ENCODE measurements at regions of chr19 and their contacts with region 1.

Region 1: GRCh38 chr19:12952488-12953137 is 4.4 kb downstream of the GADD45GIP1 start:
- DNase-seq: no peak
- H3K4me3 ChIP-seq: no peak overlapping the region
- H3K27ac ChIP-seq: peak overlapping the region; percentile 24
- H3K4me1 ChIP-seq: peaks cover 35% of the 10 kb centered on the region
- H3K27me3 ChIP-seq: no peaks in the 10 kb centered on the region
- CTCF ChIP-seq: no peak

Region 2: DNA sequence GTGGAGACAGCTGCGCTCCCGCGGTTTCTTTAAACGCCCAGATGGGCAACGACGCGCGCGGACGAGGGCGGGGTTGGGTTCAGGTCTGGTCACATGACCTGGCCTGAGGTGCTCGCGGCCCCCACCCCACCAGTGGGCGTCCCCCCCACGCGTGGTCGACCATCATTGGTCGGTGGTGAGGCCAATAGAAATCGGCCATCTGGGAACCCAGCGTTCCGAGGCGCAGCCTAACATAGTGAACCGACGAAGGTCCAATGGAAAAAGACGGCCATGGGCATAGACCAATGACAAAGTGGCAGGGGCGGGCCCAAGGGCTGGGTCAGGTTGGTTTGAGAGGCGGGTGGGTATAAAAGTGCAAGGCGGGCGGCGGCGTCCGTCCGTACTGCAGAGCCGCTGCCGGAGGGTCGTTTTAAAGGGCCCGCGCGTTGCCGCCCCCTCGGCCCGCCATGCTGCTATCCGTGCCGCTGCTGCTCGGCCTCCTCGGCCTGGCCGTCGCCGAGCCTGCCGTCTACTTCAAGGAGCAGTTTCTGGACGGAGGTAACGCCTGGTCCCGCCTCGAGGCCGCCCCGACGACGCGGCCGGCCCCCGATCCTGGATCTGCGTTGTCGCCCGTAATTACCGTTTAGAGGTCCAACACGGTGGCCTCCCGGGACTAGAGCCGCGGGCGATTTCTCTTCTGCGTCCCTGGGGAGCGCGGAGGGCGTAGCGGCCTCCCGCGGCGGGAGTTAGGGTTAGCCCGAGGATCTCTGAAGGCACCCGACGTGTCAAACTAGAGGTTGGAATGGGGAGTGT is 14.2 kb before region 1 on chr19 and contains the start of gene CALR:
- CTCF ChIA-PET with region 1: interaction called, 12 read pairs
- POLR2A ChIA-PET with region 1: no interaction called
- intact Hi-C with region 1: no loop called
- DNase-seq: peak; percentile 100
- H3K4me3 ChIP-seq: peak within 1 kb of the TSS; percentile 91
- H3K27ac ChIP-seq: peak within 1 kb of the TSS; percentile 95
- H3K4me1 ChIP-seq: peaks cover 32% of the 10 kb centered on the region
- H3K27me3 ChIP-seq: no peaks in the 10 kb centered on the region
- CTCF ChIP-seq: 0 out of 2 replicates have a peak, but pooled peaks have one; percentile 18
- total RNA-seq, gene CALR: 994 and 1,019 TPM in 2 replicates

Region 3: GRCh38 chr19:13172068-13172896 is 219.7 kb after region 1 on chr19:
- CTCF ChIA-PET with region 1: no interaction called
- POLR2A ChIA-PET with region 1: no interaction called
- intact Hi-C with region 1: no loop called
- DNase-seq: peak; percentile 84
- H3K4me3 ChIP-seq: no peak overlapping the region
- H3K27ac ChIP-seq: peak overlapping the region; percentile 55
- H3K4me1 ChIP-seq: peaks cover 28% of the 10 kb centered on the region
- H3K27me3 ChIP-seq: no peaks in the 10 kb centered on the region
- CTCF ChIP-seq: no peak

Region 4: GRCh38 chr19:13255041-13255718 is 302.6 kb after region 1 on chr19:
- CTCF ChIA-PET with region 1: no interaction called
- POLR2A ChIA-PET with region 1: interaction called, 26 read pairs
- intact Hi-C with region 1: no loop called
- DNase-seq: no peak
- H3K4me3 ChIP-seq: no peak overlapping the region
- H3K27ac ChIP-seq: no peak overlapping the region
- H3K4me1 ChIP-seq: no peaks in the 10 kb centered on the region
- H3K27me3 ChIP-seq: no peaks in the 10 kb centered on the region
- CTCF ChIP-seq: no peak